ENCODE measurements at regions of chr9 and their contacts with region 1.

Region 1: GRCh38 chr9:102714193-102714592 is 280.9 kb upstream of the CYLC2 start:
- DNase-seq: no peak

Region 2: GRCh38 chr9:102740577-102740976 is 26.4 kb after region 1 on chr9:
- intact Hi-C with region 1: loop called in 1 of 2 experiments (anchors 1 kb)
- DNase-seq: no peak

Measured in posterior vena cava (tissue), 2 donors.